Left ventricle myocardium superior (tissue), 1 donor: ENCODE measurements at regions of chr3 and their contacts with region 1.

Region 1: GRCh38 chr3:139935016-139935865 is at the start of gene CLSTN2:
- DNase-seq: peak; percentile 89
- ATAC-seq: peak; percentile 91
- total RNA-seq, gene CLSTN2: 4.9 TPM

Region 2: GRCh38 chr3:139718415-139718814 is 216.8 kb before region 1 on chr3:
- intact Hi-C with region 1: loop called (anchors 10 kb)
- DNase-seq: peak; percentile 41
- ATAC-seq: peak; percentile 83